Mammary epithelial cell (primary cell): ENCODE measurements at regions of chr7 and their contacts with region 1.

Region 1: GRCh38 chr7:94643771-94644540 is 12.0 kb downstream of the SGCE start:
- DNase-seq: peak; percentile 89
- H3K4me3 ChIP-seq: peak overlapping the region in 2 of 3 experiments; percentile 17 to 36
- H3K27ac ChIP-seq: peak overlapping the region; percentile 89
- H3K4me1 ChIP-seq: peaks cover 41% of the 10 kb centered on the region
- H3K27me3 ChIP-seq: no peaks in the 10 kb centered on the region
- CTCF ChIP-seq: no peak

Region 2: DNA sequence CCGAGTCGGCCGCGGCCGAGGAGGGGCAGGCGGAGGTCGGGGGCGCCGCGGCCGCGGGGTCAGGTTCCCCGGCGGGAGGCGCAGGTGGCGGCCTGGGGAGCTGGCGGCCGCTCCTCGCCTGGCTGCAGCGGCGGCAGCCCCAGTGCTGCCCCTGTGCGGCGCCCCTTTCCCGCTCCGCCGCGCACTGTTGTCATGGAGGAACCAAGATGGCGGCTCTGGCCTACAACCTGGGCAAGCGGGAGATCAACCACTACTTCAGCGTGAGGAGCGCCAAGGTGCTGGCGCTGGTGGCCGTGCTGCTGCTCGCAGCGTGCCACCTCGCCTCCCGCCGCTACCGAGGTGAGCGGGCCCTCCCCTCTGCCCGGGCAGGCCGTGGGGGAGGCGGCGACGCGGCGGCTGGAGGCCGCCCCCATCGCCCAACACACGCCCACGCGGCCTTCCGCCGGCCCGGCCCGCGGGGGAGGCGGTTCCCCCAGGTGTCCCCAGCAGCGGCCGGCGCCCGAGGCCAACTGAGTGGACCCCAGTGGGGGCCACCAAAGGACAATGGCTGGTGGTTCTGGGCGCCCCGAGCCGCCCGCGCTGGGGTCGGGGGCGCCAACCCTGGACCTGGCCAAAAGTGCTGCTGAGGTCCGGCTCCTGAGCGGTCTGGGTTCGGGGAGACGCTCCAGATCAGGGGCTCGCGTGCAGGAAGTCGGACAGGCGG is 133.9 kb before region 1 on chr7:
- CTCF ChIA-PET with region 1: no interaction called
- dilution Hi-C with region 1: no loop called
- in situ Hi-C with region 1: no loop called
- intact Hi-C with region 1: loop called (anchors 5 kb)
- DNase-seq: peak; percentile 48
- H3K4me3 ChIP-seq: peak overlapping the region; percentile 54 to 86 (median 83)
- H3K27ac ChIP-seq: peak overlapping the region; percentile 68
- H3K4me1 ChIP-seq: peaks cover 25% of the 10 kb centered on the region
- H3K27me3 ChIP-seq: no peaks in the 10 kb centered on the region
- CTCF ChIP-seq: peak in 1 of 2 donors; percentile 43

Region 3: GRCh38 chr7:94580596-94580995 is 63.4 kb before region 1 on chr7:
- CTCF ChIA-PET with region 1: no interaction called
- dilution Hi-C with region 1: no loop called
- in situ Hi-C with region 1: no loop called
- intact Hi-C with region 1: loop called (anchors 5 kb)
- DNase-seq: peak; percentile 31
- H3K4me3 ChIP-seq: no peak overlapping the region
- H3K27ac ChIP-seq: no peak overlapping the region
- H3K4me1 ChIP-seq: peaks cover 9% of the 10 kb centered on the region
- H3K27me3 ChIP-seq: no peaks in the 10 kb centered on the region
- CTCF ChIP-seq: no peak